Posterior cingulate gyrus (tissue), 11 donors: ENCODE measurements at regions of chr14 and their contacts with region 1.

Region 1: DNA sequence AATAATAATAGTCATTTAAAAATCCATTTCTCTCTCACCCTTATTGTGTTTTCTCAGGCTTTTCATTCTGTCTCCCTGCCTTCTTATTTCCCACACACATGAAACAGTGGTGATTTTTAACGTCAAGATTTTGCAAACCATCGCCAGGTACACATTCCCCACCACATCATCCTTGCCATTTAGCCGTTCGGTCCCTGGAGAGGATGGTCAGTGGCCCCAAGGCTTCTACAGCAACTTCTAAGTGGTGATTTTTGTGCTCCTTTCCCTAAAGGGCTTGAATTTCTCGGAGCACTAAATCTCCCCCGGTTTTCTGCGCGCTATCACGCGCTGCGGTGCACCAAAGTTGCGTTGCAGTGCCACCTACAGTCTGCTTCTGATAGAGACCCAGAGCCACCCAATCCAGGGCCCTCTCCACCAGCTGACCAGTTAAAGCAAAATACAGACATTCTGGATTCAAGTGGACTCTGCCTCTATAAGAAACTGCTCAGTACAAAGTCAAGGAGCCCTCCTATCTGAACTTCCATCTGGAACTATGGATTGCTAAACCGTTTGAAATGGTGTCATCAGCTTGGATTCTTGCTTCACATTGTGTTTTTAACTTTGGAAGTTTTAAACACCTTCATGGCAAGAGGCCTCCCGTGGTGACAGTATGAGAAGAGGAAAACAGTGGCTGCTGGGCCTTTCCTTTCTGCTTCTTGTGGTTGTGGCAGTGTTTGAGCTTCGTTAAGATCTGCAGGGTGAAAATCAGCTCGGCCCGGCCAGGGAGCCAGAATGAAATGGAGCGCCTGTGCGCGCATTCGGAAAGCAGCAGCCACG is 234.0 kb downstream of the SPTSSA start:
- DNase-seq: peak; percentile 51 to 94 (median 72)

Region 2: GRCh38 chr14:33839193-33840076 is 388.6 kb before region 1 on chr14:
- intact Hi-C with region 1: loop called (anchors 2 kb)
- DNase-seq: peak in 8 of 10 donors; percentile 44 to 89 (median 65)

Region 3: DNA sequence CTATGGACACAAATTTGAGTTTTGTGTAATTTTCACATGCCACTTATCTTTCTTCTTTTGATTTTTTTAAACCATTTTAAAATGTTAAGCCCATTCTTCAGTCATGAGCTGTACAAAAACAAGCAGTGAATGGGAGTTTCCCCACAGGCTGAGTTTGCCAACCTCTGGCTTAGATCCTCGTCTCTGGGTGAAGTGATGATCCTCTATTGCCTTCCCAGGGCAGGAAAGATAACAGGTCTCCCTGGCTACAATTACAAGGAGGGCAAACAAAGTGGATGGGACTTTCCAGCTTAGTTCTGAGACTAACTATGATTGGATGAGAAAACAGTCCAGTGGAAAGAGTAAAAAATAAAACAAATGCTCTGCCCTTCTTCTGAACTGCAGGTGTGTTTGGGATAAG is 30.3 kb after region 1 on chr14:
- intact Hi-C with region 1: loop called (anchors 1 kb)
- DNase-seq: no peak